ENCODE measurements at regions of chr5 and their contacts with region 1.

Region 1: DNA sequence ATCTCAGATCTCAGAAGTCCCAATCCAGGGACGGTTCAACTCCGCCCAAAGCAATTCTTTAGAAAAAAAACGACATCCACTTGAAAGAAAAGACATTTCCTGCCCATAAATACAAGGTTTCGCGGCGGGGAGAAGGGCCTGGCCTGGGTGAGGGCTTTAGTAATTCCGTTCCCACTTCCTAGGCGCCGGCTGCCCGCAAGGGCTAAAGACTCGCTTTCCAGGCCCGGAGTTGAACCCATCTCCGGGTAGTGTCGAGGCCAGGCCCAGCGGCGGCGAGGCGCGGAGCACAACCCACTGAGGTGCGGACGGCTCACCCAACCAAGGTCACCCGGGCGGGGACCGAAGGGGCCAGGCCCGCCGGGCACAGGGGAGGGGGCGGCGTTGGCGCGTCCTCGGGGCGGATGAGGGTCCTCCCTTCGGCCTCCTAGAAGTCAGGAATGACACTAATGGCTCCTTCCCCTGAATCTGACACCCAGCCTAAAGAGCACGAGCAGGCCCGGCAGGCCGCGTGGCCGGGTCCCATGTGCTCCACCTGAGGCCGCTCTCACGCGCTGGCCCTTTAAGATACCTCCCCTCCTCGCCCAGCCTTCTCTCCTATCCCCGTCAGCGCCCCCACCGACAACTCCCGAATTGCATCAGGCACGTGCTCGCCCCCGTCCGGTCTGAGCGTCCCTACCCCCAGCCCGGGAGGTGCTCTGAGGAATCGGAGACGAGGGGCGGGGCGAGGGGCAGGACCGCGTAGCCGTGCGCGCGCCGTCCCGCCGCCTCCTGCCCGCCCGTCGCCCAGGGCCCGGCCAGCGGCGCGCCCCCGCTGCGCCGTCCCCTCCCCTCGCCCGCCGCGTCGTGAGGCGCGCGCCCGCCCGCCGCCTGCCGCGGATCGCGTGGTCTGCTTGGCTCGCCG is 467 bp upstream of the LARP1 start:
- DNase-seq: peak; percentile 97 to 99 (median 99)
- ATAC-seq: peak; percentile 94
- H3K4me3 ChIP-seq: peak overlapping the region; percentile 72
- H3K4me3 Mint-ChIP-seq: peak overlapping the region; percentile 88 to 98 (median 92)
- H3K27ac ChIP-seq: peak overlapping the region; percentile 96
- H3K27ac Mint-ChIP-seq: peak overlapping the region; percentile 92 to 98 (median 98)
- H3K4me1 ChIP-seq: peaks cover 30 to 32% of the 10 kb centered on the region in 2 donors
- H3K4me1 Mint-ChIP-seq: peaks cover 27 to 45% (median 33%) of the 10 kb centered on the region in 7 donors
- H3K27me3 ChIP-seq: no peaks in the 10 kb centered on the region
- H3K27me3 Mint-ChIP-seq: no peaks in the 10 kb centered on the region

Region 2: DNA sequence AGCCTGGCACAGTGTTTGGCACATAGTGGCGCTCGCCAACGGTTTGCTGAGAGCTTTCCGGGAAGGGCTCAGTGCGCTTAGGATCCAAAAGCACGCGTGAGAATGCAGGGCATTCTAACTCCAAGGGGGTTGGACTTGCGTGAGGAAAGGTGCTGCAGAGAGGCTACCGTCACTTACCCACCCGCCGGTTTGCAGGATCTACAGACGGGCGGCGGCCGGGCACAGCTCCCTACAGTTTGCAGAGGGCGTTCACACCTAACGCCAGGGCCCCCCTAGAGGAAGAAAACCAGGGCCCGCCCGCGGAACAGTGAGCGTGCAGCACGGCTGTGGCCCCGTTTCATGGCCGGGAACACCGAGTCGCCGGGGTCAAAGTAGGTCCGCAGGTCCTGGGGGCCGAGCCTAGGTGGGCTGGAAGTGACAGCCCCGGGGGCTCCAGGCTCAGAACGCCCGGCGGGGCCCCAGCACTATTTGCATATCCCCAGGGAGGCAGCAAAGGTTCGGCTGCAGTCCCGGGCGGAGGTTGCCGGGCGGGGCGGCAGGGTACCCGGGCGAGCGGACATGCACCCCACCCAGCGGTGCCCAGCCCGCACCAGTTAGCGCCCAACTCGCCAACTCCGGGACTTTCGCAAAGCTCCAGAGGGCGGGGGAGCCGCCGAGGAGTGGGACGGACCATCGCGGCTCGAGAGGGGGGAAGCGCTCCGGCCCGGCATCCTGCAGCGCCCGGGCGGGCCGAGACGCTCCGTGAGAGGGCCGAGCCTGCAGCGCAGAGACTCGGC is 564.7 kb before region 1 on chr5:
- CTCF ChIA-PET with region 1: no interaction called
- POLR2A ChIA-PET with region 1: no interaction called
- intact Hi-C with region 1: loop called (anchors 2 to 5 kb)
- DNase-seq: peak; percentile 63 to 82 (median 79)
- ATAC-seq: peak; percentile 93
- H3K4me3 ChIP-seq: peak overlapping the region; percentile 94
- H3K4me3 Mint-ChIP-seq: peak overlapping the region; percentile 82 to 93 (median 88)
- H3K27ac ChIP-seq: peak overlapping the region; percentile 80
- H3K27ac Mint-ChIP-seq: peak overlapping the region; percentile 71 to 83 (median 78)
- H3K4me1 ChIP-seq: peaks cover 16 to 22% of the 10 kb centered on the region in 2 donors
- H3K4me1 Mint-ChIP-seq: peaks cover 33 to 49% (median 41%) of the 10 kb centered on the region in 7 donors
- H3K27me3 ChIP-seq: no peaks in the 10 kb centered on the region
- H3K27me3 Mint-ChIP-seq: peaks cover 0 to 12% (median 0%) of the 10 kb centered on the region in 5 donors

Region 3: DNA sequence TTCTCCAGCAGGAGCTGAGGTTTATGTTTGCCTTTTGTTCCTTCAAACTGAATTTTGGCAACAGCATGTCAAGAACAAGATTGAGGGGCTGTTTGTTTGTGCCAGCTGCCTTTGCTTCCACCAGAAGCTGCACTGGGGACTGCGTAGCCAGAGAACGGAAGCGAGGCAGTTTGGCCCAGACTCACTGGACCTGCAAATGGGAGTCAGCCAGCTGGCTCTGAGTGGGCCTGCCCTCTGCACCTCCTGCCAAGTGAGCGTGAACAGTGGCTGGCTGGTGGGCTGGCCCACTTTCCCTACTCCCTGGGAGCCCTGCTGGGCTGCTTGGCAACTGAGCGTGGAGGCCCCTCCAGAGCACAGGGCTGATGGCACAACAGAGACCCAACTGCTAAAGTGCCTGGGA is 452.5 kb before region 1 on chr5:
- CTCF ChIA-PET with region 1: no interaction called
- POLR2A ChIA-PET with region 1: no interaction called
- intact Hi-C with region 1: no loop called
- DNase-seq: no peak
- ATAC-seq: no peak
- H3K4me3 ChIP-seq: no peak overlapping the region
- H3K4me3 Mint-ChIP-seq: no peak overlapping the region
- H3K27ac ChIP-seq: no peak overlapping the region
- H3K27ac Mint-ChIP-seq: no peak overlapping the region
- H3K4me1 ChIP-seq: no peaks in the 10 kb centered on the region
- H3K4me1 Mint-ChIP-seq: peaks cover 0 to 3% (median 0%) of the 10 kb centered on the region in 7 donors
- H3K27me3 ChIP-seq: no peaks in the 10 kb centered on the region
- H3K27me3 Mint-ChIP-seq: no peaks in the 10 kb centered on the region

Region 4: DNA sequence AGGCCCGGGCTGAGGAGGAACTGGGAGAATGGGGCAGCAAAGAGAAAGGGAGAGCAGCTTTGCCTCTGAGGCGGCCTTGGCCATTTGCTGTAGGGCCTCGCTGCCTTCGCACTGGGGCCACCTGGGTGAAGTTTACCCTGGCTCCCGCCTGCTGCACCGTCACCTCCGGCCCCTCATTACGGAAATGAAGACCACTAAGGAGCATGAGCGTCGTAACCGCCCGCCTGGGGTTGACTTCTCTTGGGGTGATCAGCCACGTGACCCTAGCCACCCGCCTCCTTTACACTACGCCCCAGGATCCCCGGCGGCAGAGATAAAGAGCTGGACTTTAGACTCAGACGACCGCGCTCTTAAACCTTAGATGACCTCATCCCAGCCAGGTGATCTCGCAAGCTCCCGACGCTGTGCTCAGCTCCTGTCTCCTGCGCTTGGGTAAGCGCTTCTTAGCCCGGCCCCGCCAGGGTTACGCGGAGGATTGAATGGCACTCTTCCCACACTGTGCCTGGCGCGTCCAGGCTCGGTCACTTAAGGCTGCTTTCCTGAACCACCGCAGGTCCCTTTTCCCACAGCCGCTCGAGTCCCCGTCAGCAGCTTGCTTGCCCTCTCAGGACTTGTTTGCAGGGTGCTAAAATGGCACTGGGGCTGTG is 107.5 kb before region 1 on chr5:
- CTCF ChIA-PET with region 1: interaction called, 5 read pairs
- POLR2A ChIA-PET with region 1: no interaction called
- intact Hi-C with region 1: loop called (anchors 1 kb)
- DNase-seq: no peak
- ATAC-seq: peak; percentile 52
- H3K4me3 ChIP-seq: peak overlapping the region; percentile 54
- H3K4me3 Mint-ChIP-seq: peak overlapping the region; percentile 72 to 87 (median 84)
- H3K27ac ChIP-seq: no peak overlapping the region
- H3K27ac Mint-ChIP-seq: peak overlapping the region in 1 of 9 donors; percentile 59
- H3K4me1 ChIP-seq: peaks cover 0 to 3% of the 10 kb centered on the region in 2 donors
- H3K4me1 Mint-ChIP-seq: peaks cover 10 to 19% (median 16%) of the 10 kb centered on the region in 7 donors
- H3K27me3 ChIP-seq: peaks cover 0 to 12% of the 10 kb centered on the region in 2 donors
- H3K27me3 Mint-ChIP-seq: peaks cover 18 to 46% (median 28%) of the 10 kb centered on the region in 5 donors

Region 5: GRCh38 chr5:154714266-154714986 is 40.3 kb before region 1 on chr5:
- CTCF ChIA-PET with region 1: no interaction called
- POLR2A ChIA-PET with region 1: no interaction called
- intact Hi-C with region 1: loop called in 1 of 2 experiments (anchors 5 kb)
- DNase-seq: peak in 5 of 9 donors; percentile 2 to 20 (median 7)
- ATAC-seq: peak; percentile 73
- H3K4me3 ChIP-seq: no peak overlapping the region
- H3K4me3 Mint-ChIP-seq: peak overlapping the region; percentile 20 to 79 (median 60)
- H3K27ac ChIP-seq: no peak overlapping the region
- H3K27ac Mint-ChIP-seq: peak overlapping the region in 8 of 9 donors; percentile 3 to 91 (median 58)
- H3K4me1 ChIP-seq: peaks cover 0 to 6% of the 10 kb centered on the region in 2 donors
- H3K4me1 Mint-ChIP-seq: peaks cover 3 to 15% (median 7%) of the 10 kb centered on the region in 7 donors
- H3K27me3 ChIP-seq: no peaks in the 10 kb centered on the region
- H3K27me3 Mint-ChIP-seq: no peaks in the 10 kb centered on the region

Region 6: GRCh38 chr5:154794525-154795234 is 40.0 kb after region 1 on chr5:
- CTCF ChIA-PET with region 1: interaction called, 3 read pairs
- POLR2A ChIA-PET with region 1: no interaction called
- intact Hi-C with region 1: loop called in 1 of 2 experiments (anchors 5 kb)
- DNase-seq: no peak
- ATAC-seq: no peak
- H3K4me3 ChIP-seq: no peak overlapping the region
- H3K4me3 Mint-ChIP-seq: no peak overlapping the region
- H3K27ac ChIP-seq: no peak overlapping the region
- H3K27ac Mint-ChIP-seq: peak overlapping the region in 5 of 9 donors; percentile 1 to 50 (median 8)
- H3K4me1 ChIP-seq: no peaks in the 10 kb centered on the region
- H3K4me1 Mint-ChIP-seq: peaks cover 0 to 12% (median 7%) of the 10 kb centered on the region in 7 donors
- H3K27me3 ChIP-seq: no peaks in the 10 kb centered on the region
- H3K27me3 Mint-ChIP-seq: no peaks in the 10 kb centered on the region

Region 7: DNA sequence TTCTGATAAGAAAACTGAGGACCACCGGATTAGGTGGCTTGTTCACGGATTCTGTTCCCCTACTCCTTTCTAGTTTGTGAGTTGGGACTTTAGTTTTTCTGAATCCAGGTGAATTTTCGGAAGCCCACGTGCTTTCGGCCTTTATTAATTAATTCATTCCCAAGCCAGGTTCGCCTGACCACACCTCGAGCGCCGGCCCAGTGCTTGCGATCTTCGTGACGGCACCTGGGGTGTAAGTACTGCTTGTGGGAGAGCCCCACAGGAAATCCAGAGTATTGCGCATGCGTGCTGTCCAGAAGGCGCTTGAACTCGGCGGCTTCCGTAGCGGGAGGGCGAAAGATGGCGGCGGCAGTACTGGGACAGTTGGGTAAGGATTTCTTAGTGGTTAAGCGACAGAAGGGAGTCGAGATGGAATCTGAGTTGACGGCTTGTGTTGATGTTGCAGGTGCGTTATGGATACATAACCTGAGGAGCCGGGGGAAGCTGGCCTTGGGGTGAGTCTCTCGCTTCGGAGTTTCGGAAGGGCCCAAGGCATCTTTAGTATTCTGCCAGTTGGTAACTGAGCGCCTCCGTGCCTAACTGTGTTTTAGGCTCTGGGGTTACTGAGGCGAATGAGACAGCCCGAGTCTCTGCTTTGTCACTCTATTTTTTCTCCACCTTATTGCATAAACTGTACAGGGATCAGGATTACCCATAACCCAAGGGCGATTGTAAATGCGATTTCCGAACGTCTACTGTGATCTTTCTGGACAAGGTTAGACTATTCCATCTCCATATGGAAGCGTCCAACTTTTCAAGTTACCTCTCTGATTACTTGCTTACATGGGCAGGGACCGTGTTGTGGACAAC is 186.3 kb after region 1 on chr5 and contains the start of gene MRPL22:
- CTCF ChIA-PET with region 1: no interaction called
- POLR2A ChIA-PET with region 1: no interaction called
- intact Hi-C with region 1: loop called (anchors 1 kb)
- DNase-seq: peak; percentile 85 to 99 (median 94)
- ATAC-seq: peak; percentile 84
- H3K4me3 ChIP-seq: peak within 1 kb of the TSS; percentile 76
- H3K4me3 Mint-ChIP-seq: peak within 1 kb of the TSS; percentile 89 to 100 (median 96)
- H3K27ac ChIP-seq: peak within 1 kb of the TSS; percentile 94
- H3K27ac Mint-ChIP-seq: peak within 1 kb of the TSS; percentile 93 to 98 (median 96)
- H3K4me1 ChIP-seq: peaks cover 22 to 25% of the 10 kb centered on the region in 2 donors
- H3K4me1 Mint-ChIP-seq: peaks cover 23 to 62% (median 47%) of the 10 kb centered on the region in 7 donors
- H3K27me3 ChIP-seq: no peaks in the 10 kb centered on the region
- H3K27me3 Mint-ChIP-seq: no peaks in the 10 kb centered on the region
- total RNA-seq, gene MRPL22: 18.4 to 62.0 (median 24.9) TPM

Measured in naive thymus-derived CD4-positive, alpha-beta T cell (primary cell).